Uterus (tissue), 4 donors: ENCODE measurements at regions of chr10 and their contacts with region 1.

Region 1: GRCh38 chr10:117174439-117175214 is 22.7 kb upstream of the KCNK18 start:
- DNase-seq: peak; percentile 57 to 66
- H3K4me3 ChIP-seq: peak overlapping the region; percentile 26 to 38
- H3K27ac ChIP-seq: no peak overlapping the region
- H3K4me1 ChIP-seq: no peaks in the 10 kb centered on the region
- H3K27me3 ChIP-seq: peaks cover 0 to 27% of the 10 kb centered on the region in 2 donors
- CTCF ChIP-seq: peak; percentile 63 to 78 (median 72)
- POLR2A ChIP-seq: no peak

Region 2: DNA sequence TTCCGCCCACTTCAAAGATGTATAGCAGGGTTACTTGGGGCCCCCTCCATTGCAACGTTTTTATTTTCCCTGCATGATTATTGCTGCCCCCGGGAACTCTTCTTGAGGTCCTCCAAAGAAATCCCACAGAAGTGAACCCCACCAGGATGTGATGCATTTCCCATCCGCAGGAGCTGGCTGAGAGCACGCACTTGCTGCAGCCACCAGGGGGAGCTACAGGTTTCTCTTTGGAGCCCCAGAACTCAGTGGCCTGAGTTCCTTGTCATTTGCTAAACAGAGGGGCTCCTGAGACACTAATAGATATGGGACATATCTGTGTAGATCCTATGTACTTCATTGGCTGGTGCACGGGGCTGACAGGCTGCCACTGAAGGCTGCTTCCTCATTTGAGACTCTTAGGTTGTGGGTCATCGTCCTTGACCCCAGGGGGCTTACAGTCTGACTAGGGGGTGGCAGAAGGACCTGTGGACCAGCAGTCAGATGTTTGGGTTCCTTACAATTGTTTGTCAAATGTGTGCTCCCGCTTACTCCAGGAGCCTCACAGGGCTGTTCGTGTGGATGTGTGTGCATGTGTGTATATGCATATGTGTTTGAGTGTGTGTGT is 377.6 kb before region 1 on chr10:
- intact Hi-C with region 1: loop called (anchors 10 kb)
- DNase-seq: peak; percentile 46 to 67
- H3K4me3 ChIP-seq: no peak overlapping the region
- H3K27ac ChIP-seq: no peak overlapping the region
- H3K4me1 ChIP-seq: no peaks in the 10 kb centered on the region
- H3K27me3 ChIP-seq: peaks cover 0 to 5% of the 10 kb centered on the region in 2 donors
- CTCF ChIP-seq: peak; percentile 69 to 78 (median 74)
- POLR2A ChIP-seq: no peak

Region 3: DNA sequence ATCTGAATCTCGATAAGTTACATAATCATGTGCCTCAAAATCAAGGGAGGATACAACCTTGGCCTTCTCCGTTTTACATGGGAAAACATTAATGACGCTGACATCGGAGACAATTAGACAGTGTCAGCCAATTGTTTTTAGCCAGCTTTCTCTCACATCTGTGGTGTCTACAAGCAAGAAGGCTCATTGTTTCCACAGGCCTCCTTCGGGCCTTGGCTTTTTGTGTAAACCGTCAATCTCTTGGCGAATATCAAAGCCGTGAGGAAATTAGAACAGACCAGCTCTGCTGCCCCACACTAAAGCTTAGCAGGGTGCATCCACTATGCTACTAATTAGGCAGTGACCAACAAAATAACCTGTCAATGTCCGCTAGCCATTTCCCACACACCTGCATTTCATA is 79.8 kb before region 1 on chr10:
- intact Hi-C with region 1: no loop called
- DNase-seq: no peak
- H3K4me3 ChIP-seq: no peak overlapping the region
- H3K27ac ChIP-seq: no peak overlapping the region
- H3K4me1 ChIP-seq: no peaks in the 10 kb centered on the region
- H3K27me3 ChIP-seq: peaks cover 0 to 4% of the 10 kb centered on the region in 2 donors
- CTCF ChIP-seq: no peak
- POLR2A ChIP-seq: no peak